Dorsolateral prefrontal cortex (tissue), 120 donors: ENCODE measurements at regions of chr20 and their contacts with region 1.

Region 1: DNA sequence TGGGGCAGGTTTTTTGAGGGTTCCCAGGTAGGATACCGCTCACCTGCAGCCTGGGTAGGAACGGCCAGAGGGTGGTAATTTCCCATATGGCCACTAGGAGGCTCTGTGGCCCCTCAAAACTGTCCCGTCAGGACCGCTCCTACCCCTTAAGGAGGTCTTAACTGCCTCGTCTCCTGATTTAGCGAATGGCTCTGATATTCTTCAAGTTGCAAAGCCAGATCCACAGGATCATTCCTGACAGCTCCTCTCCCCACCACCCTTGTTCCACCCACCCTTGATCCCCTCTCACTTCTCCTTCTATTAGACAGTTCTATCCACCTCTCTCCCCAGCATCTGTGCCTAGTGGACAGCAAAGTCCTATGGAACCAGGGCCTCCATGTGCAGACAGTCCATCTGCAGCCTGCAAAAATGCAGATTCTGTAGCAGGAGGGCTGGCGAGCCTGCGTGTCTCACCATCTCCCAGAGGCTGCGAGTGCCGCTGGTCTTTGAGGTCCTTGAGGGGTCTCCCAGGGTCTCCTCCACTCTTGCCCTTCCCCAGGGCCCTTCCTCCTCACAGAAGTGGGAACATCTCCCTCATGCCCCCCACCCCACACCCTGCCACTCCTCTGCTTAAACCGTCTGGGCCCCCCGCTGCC is 34.3 kb upstream of the ZBP1 start:
- DNase-seq: peak; percentile 17 to 78 (median 36)
- H3K4me3 ChIP-seq: no peak overlapping the region
- H3K27ac ChIP-seq: peak overlapping the region in 1 of 59 donors; percentile 18
- H3K27me3 ChIP-seq: no peaks in the 10 kb centered on the region
- CTCF ChIP-seq: peak; percentile 77 to 99 (median 91)

Region 2: DNA sequence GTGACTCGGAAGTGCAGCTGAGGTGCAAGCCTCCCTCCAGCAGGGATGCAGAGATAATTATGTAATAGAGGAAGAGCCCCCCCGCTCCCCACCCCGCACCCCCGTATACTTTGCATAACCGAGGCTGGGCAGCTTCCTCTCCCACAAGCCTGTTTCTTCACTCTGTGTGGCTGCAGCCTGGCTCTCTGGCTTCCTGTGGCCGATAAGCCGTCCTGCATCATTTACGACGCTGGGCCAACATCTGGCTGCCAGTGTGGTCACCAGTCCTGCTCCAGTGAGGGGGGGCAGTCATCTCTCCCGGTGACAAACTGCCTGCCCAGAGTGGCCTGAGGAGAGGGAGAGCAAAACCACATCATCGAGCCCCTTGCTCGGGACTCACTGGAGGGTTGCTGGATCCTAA is 204.1 kb before region 1 on chr20:
- intact Hi-C with region 1: no loop called
- DNase-seq: peak in 1 of 10 donors; percentile 37
- H3K4me3 ChIP-seq: no peak overlapping the region
- H3K27ac ChIP-seq: no peak overlapping the region
- H3K27me3 ChIP-seq: peaks cover 0 to 4% (median 0%) of the 10 kb centered on the region in 45 donors
- CTCF ChIP-seq: no peak

Region 3: GRCh38 chr20:57964011-57964862 is 309.8 kb after region 1 on chr20:
- intact Hi-C with region 1: loop called in 1 of 2 experiments (anchors 5 kb)
- DNase-seq: peak in 2 of 10 donors; percentile 44 to 58
- H3K4me3 ChIP-seq: no peak overlapping the region
- H3K27ac ChIP-seq: peak overlapping the region in 22 of 59 donors; percentile 6 to 65 (median 39)
- H3K27me3 ChIP-seq: peaks cover 0 to 13% (median 0%) of the 10 kb centered on the region in 45 donors
- CTCF ChIP-seq: no peak

Region 4: GRCh38 chr20:58087193-58087858 is 432.8 kb after region 1 on chr20:
- intact Hi-C with region 1: loop called in 1 of 2 experiments (anchors 5 kb)
- DNase-seq: peak in 5 of 10 donors; percentile 15 to 52 (median 48)
- H3K4me3 ChIP-seq: no peak overlapping the region
- H3K27ac ChIP-seq: no peak overlapping the region
- H3K27me3 ChIP-seq: no peaks in the 10 kb centered on the region
- CTCF ChIP-seq: peak; percentile 66 to 90 (median 82)